GM12878 (cell line): ENCODE measurements at regions of chr5 and their contacts with region 1.

Region 1: GRCh38 chr5:44875661-44876605 is 67.2 kb downstream of the MRPS30 start:
- DNase-seq: peak; percentile 55
- ATAC-seq: peak; percentile 99
- H3K4me3 ChIP-seq: 0 out of 2 replicates have a peak overlapping the region, but pooled peaks have one; percentile 18
- H3K27ac ChIP-seq: peak overlapping the region; percentile 87
- H3K4me1 ChIP-seq: peaks cover 11% of the 10 kb centered on the region
- H3K27me3 ChIP-seq: no peaks in the 10 kb centered on the region
- CTCF ChIP-seq: no peak
- EP300 ChIP-seq: peak in 1 of 2 experiments; percentile 68; a peak in 1 of 4 replicates
- POLR2A ChIP-seq: no peak
- RAD21 ChIP-seq: no peak

Region 2: GRCh38 chr5:44698007-44698406 is 177.9 kb before region 1 on chr5:
- CTCF ChIA-PET with region 1: no interaction called
- POLR2A ChIA-PET with region 1: no interaction called
- RAD21 ChIA-PET with region 1: no interaction called
- SMC1A ChIA-PET with region 1: no interaction called
- in situ Hi-C with region 1: no loop called
- intact Hi-C with region 1: no loop called
- DNase-seq: no peak
- ATAC-seq: no peak
- H3K4me3 ChIP-seq: no peak overlapping the region
- H3K27ac ChIP-seq: no peak overlapping the region
- H3K4me1 ChIP-seq: no peaks in the 10 kb centered on the region
- H3K27me3 ChIP-seq: no peaks in the 10 kb centered on the region
- CTCF ChIP-seq: no peak
- EP300 ChIP-seq: no peak
- POLR2A ChIP-seq: no peak
- RAD21 ChIP-seq: no peak

Region 3: DNA sequence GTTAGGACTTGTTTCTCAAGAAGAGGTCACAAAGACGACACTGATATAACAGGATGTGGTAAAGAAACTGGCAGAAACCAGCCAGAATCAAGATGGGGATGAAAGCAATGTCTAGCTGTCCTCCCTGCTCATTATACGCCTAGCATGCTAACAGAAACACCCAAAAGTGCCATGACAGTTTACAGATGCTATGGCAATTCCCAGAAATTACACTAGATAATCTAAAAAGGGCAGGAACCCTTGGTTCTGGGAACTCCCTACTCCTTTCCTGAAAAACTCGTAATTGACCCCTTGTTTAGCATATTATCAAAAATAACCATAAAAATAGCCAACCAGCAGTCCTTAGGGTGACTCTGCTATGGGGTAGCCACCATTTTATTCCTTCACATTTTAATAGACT is 78.1 kb before region 1 on chr5:
- CTCF ChIA-PET with region 1: no interaction called
- POLR2A ChIA-PET with region 1: no interaction called
- RAD21 ChIA-PET with region 1: no interaction called
- SMC1A ChIA-PET with region 1: no interaction called
- in situ Hi-C with region 1: no loop called
- intact Hi-C with region 1: no loop called
- DNase-seq: no peak
- ATAC-seq: no peak
- H3K4me3 ChIP-seq: no peak overlapping the region
- H3K27ac ChIP-seq: no peak overlapping the region
- H3K4me1 ChIP-seq: no peaks in the 10 kb centered on the region
- H3K27me3 ChIP-seq: no peaks in the 10 kb centered on the region
- CTCF ChIP-seq: no peak
- EP300 ChIP-seq: no peak
- POLR2A ChIP-seq: no peak
- RAD21 ChIP-seq: no peak

Region 4: DNA sequence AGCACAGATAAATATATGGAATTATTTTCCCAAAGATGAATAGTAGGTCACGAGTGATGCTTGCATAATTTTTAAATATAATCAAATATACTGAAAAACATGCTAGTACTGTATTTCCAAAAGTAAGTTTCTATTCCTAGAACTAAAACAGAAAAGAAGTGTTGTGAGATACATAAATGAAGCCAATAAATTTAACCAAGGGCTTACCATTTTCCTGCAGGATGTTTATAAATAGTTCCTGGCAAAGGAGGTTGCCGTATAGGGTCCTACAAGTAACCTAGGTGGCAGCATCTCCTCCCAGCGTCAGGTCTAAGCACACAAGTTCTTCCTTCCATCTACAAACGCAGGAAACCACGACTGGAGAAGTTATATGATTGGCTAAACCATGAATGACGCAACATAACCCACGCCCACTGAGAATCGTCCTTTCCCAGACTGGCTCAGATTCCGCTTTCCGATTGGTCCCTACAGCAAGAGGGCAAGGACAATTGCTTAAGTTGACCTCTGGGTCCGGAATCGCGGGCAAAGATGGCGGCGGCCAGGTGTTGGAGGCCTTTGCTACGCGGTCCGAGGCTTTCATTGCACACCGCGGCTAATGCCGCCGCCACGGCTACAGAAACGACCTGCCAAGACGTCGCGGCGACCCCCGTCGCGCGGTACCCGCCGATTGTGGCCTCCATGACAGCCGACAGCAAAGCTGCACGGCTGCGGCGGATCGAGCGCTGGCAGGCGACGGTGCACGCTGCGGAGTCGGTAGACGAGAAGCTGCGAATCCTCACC is 67.3 kb before region 1 on chr5 and contains the start of gene MRPS30:
- CTCF ChIA-PET with region 1: no interaction called
- POLR2A ChIA-PET with region 1: no interaction called
- RAD21 ChIA-PET with region 1: no interaction called
- SMC1A ChIA-PET with region 1: no interaction called
- in situ Hi-C with region 1: no loop called
- intact Hi-C with region 1: loop called (anchors 2 kb)
- DNase-seq: peak; percentile 100
- ATAC-seq: peak; percentile 95
- H3K4me3 ChIP-seq: peak within 1 kb of the TSS; percentile 90
- H3K27ac ChIP-seq: peak within 1 kb of the TSS; percentile 84
- H3K4me1 ChIP-seq: peaks cover 3% of the 10 kb centered on the region; the same call in 1 of the 2 replicates
- H3K27me3 ChIP-seq: no peaks in the 10 kb centered on the region
- CTCF ChIP-seq: peak; percentile 36 to 57 (median 46); a peak in 4 of 6 replicates
- EP300 ChIP-seq: no peak
- POLR2A ChIP-seq: peak; percentile 96
- RAD21 ChIP-seq: no peak; the same call in 1 of the 2 replicates
- polyA plus RNA-seq, gene MRPS30: 18.5 to 19.8 TPM

Region 5: DNA sequence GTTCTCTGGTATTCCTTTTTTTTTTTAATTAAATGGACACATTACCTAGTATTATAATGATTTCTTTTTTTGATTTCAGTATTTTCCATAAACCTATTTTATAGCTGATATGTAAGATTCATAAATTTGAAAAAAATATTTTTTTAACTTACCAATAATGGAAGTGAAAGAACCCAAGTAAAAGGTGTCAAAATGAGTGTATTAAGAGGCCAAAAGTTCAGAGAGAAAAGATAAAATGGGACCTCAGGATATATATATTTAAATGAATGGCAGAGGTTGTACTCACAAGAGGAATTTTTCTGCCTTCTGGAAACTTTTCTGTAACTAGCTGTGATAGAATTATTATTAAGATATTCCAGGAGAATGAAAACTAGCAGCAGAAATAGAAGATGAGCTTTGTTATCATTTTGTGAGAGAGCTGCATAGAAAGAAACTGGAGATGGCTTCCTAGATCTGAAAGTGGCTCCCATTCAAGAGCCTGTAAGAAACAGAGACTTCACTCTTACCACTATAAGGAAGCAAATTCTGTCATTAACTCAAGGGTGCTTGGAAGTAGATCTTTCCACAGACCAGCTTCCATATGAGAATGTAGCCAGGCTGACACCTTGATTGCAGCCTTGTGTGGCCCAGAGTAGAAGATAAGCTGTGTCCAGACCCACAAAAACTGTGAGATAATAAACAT is 24.5 kb after region 1 on chr5:
- CTCF ChIA-PET with region 1: no interaction called
- POLR2A ChIA-PET with region 1: no interaction called
- RAD21 ChIA-PET with region 1: interaction called, 10 read pairs
- SMC1A ChIA-PET with region 1: interaction called, 8 read pairs
- in situ Hi-C with region 1: no loop called
- intact Hi-C with region 1: no loop called
- DNase-seq: no peak
- ATAC-seq: peak; percentile 34; the same call in 2 of the 3 replicates
- H3K4me3 ChIP-seq: no peak overlapping the region
- H3K27ac ChIP-seq: peak overlapping the region; percentile 37; the same call in 1 of the 2 replicates
- H3K4me1 ChIP-seq: peaks cover 6% of the 10 kb centered on the region
- H3K27me3 ChIP-seq: no peaks in the 10 kb centered on the region
- CTCF ChIP-seq: no peak
- EP300 ChIP-seq: no peak
- POLR2A ChIP-seq: no peak
- RAD21 ChIP-seq: no peak

Region 6: GRCh38 chr5:44935262-44935661 is 59.3 kb after region 1 on chr5:
- CTCF ChIA-PET with region 1: no interaction called
- POLR2A ChIA-PET with region 1: no interaction called
- RAD21 ChIA-PET with region 1: no interaction called
- SMC1A ChIA-PET with region 1: interaction called, 4 read pairs
- in situ Hi-C with region 1: no loop called
- intact Hi-C with region 1: loop called (anchors 5 kb)
- DNase-seq: no peak
- ATAC-seq: peak; percentile 59
- H3K4me3 ChIP-seq: no peak overlapping the region
- H3K27ac ChIP-seq: no peak overlapping the region
- H3K4me1 ChIP-seq: peaks cover 5% of the 10 kb centered on the region; the same call in 1 of the 2 replicates
- H3K27me3 ChIP-seq: no peaks in the 10 kb centered on the region
- CTCF ChIP-seq: peak; percentile 23 to 39 (median 31); a peak in 5 of 6 replicates
- EP300 ChIP-seq: no peak
- POLR2A ChIP-seq: no peak
- RAD21 ChIP-seq: peak; percentile 52

Region 7: DNA sequence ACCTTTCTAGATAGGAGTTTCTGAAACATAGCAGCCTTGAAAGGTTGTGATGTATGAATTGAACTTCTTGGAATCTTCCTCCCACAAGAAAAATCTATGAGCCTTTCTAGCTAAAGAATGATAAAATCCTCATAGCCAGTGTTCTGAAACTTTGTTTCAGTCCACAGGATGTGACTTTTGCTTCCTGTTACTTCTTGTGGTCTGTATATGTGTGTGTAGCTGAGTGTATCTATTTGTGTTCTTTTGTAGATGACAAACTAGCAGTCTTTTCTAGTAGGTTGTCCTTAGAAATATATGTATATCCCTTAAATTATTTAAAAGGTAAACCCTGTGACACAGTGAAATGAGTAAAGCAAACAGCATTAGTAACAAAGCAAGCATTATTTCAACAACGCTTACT is 121.6 kb after region 1 on chr5:
- CTCF ChIA-PET with region 1: no interaction called
- POLR2A ChIA-PET with region 1: no interaction called
- RAD21 ChIA-PET with region 1: no interaction called
- SMC1A ChIA-PET with region 1: no interaction called
- in situ Hi-C with region 1: no loop called
- intact Hi-C with region 1: no loop called
- DNase-seq: no peak
- ATAC-seq: no peak
- H3K4me3 ChIP-seq: no peak overlapping the region
- H3K27ac ChIP-seq: no peak overlapping the region
- H3K4me1 ChIP-seq: no peaks in the 10 kb centered on the region
- H3K27me3 ChIP-seq: no peaks in the 10 kb centered on the region
- CTCF ChIP-seq: no peak
- EP300 ChIP-seq: no peak
- POLR2A ChIP-seq: no peak
- RAD21 ChIP-seq: no peak

Region 8: DNA sequence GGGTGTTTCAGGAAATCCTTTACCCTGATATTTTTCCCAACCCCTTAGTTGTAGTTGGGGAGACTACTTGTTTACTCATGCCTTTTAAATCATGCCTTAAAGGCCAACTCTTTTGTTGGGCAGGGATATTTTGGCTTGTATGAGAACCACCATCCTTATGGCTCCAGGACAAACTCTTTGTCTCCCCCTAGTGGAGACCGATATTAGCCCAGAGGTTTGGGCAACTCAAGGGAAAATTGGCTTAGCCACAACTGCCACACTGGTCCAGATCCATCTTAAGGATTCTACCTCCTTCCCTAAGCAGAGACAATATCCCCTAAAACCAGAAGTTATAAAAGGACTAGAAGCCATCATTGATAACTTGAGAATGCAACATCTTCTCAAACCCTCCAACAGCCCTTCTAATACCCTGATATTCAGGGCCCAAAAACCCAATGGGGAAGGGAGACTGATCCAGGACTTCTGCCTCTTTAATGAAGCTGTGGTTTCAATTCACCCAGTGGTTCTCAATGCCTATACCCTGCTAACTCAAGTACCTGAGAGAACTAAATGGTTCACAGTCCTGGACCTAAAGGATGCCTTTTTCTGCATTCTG is 921.1 kb after region 1 on chr5:
- CTCF ChIA-PET with region 1: no interaction called
- POLR2A ChIA-PET with region 1: no interaction called
- RAD21 ChIA-PET with region 1: no interaction called
- SMC1A ChIA-PET with region 1: no interaction called
- in situ Hi-C with region 1: loop called (anchors 10 kb)
- intact Hi-C with region 1: loop called (anchors 10 kb)
- DNase-seq: no peak
- ATAC-seq: no peak
- H3K4me3 ChIP-seq: no peak overlapping the region
- H3K27ac ChIP-seq: no peak overlapping the region
- H3K4me1 ChIP-seq: no peaks in the 10 kb centered on the region
- H3K27me3 ChIP-seq: no peaks in the 10 kb centered on the region
- CTCF ChIP-seq: peak in 2 of 3 experiments; percentile 3 to 40; a peak in 1 of 6 replicates
- EP300 ChIP-seq: no peak
- POLR2A ChIP-seq: no peak
- RAD21 ChIP-seq: peak; percentile 18; the same call in 1 of the 2 replicates